ENCODE measurements at regions of chr3 and their contacts with region 1.

Region 1: GRCh38 chr3:19543212-19543841 is 390.7 kb downstream of the EFHB start:
- DNase-seq: peak; percentile 18 to 36
- H3K4me3 ChIP-seq: no peak overlapping the region
- H3K4me3 Mint-ChIP-seq: no peak overlapping the region
- H3K27ac Mint-ChIP-seq: no peak overlapping the region
- H3K4me1 ChIP-seq: no peaks in the 10 kb centered on the region
- H3K4me1 Mint-ChIP-seq: no peaks in the 10 kb centered on the region
- H3K27me3 ChIP-seq: no peaks in the 10 kb centered on the region
- H3K27me3 Mint-ChIP-seq: peaks cover 3% of the 10 kb centered on the region
- CTCF ChIP-seq: peak; percentile 56 to 64

Region 2: GRCh38 chr3:19046440-19046839 is 496.9 kb before region 1 on chr3:
- CTCF ChIA-PET with region 1: no interaction called
- POLR2A ChIA-PET with region 1: no interaction called
- intact Hi-C with region 1: loop called (anchors 1 kb)
- DNase-seq: no peak
- H3K4me3 ChIP-seq: no peak overlapping the region
- H3K4me3 Mint-ChIP-seq: no peak overlapping the region
- H3K27ac Mint-ChIP-seq: no peak overlapping the region
- H3K4me1 ChIP-seq: no peaks in the 10 kb centered on the region
- H3K4me1 Mint-ChIP-seq: no peaks in the 10 kb centered on the region
- H3K27me3 ChIP-seq: no peaks in the 10 kb centered on the region
- H3K27me3 Mint-ChIP-seq: peaks cover 7% of the 10 kb centered on the region
- CTCF ChIP-seq: peak in 1 of 2 experiments; percentile 17

Region 3: GRCh38 chr3:19348929-19349564 is 194.3 kb before region 1 on chr3:
- CTCF ChIA-PET with region 1: no interaction called
- POLR2A ChIA-PET with region 1: no interaction called
- intact Hi-C with region 1: loop called (anchors 1 kb)
- DNase-seq: peak in 1 of 2 experiments; percentile 23
- H3K4me3 ChIP-seq: no peak overlapping the region
- H3K4me3 Mint-ChIP-seq: no peak overlapping the region
- H3K27ac Mint-ChIP-seq: no peak overlapping the region
- H3K4me1 ChIP-seq: no peaks in the 10 kb centered on the region
- H3K4me1 Mint-ChIP-seq: no peaks in the 10 kb centered on the region
- H3K27me3 ChIP-seq: no peaks in the 10 kb centered on the region
- H3K27me3 Mint-ChIP-seq: peaks cover 15% of the 10 kb centered on the region
- CTCF ChIP-seq: peak; percentile 53 to 79